Panc1 (cell line): ENCODE measurements at regions of chr3 and their contacts with region 1.

Region 1: DNA sequence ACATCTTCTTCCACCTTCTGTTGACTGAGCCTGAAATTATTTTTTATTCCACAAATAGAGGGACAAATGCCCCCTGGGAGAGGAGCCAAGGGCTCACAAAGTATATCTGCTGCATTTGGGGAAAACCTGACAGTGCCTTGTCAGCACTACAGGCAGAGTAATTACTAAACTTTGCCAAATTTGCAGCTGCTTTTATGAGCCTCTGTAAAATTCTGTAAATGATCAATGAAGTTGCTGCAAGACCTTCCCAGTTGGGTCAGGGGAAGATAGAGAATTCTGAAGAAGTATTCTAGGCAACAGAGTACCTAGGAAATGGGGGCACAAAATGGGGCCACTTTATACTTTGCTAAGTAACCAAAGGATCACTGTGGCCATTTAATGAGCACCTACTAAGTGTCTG is 10.5 kb downstream of the GHSR start:
- DNase-seq: no peak
- ATAC-seq: no peak
- H3K4me3 ChIP-seq: no peak overlapping the region
- H3K27ac ChIP-seq: no peak overlapping the region
- H3K4me1 ChIP-seq: no peaks in the 10 kb centered on the region
- H3K27me3 ChIP-seq: peaks cover 5% of the 10 kb centered on the region
- CTCF ChIP-seq: no peak

Region 2: DNA sequence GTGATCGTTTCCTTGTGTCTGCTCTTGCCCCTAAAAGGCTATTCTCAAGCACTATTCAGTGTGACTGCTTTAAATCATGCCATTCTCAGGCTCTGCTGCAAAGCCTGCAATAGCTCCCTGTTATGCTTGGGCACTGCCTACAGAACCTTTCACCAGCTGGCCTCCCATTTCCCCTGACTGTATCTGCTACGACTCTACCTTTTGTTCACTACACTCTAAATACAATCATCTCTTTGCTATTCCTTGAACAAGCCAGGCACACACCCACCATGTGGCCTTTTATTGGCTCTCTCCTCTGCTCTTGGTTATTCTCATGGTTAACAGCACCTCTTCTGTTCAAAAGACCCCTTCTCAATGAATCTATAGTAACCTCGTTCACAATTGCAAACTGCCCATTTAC is 427.9 kb before region 1 on chr3:
- CTCF ChIA-PET with region 1: no interaction called
- POLR2A ChIA-PET with region 1: interaction called, 10 read pairs
- in situ Hi-C with region 1: no loop called
- intact Hi-C with region 1: no loop called
- DNase-seq: no peak
- ATAC-seq: peak; percentile 64; the same call in 1 of the 2 replicates
- H3K4me3 ChIP-seq: no peak overlapping the region
- H3K27ac ChIP-seq: no peak overlapping the region
- H3K4me1 ChIP-seq: no peaks in the 10 kb centered on the region
- H3K27me3 ChIP-seq: no peaks in the 10 kb centered on the region
- CTCF ChIP-seq: no peak